ENCODE measurements at regions of chr12 and their contacts with region 1.

Region 1: DNA sequence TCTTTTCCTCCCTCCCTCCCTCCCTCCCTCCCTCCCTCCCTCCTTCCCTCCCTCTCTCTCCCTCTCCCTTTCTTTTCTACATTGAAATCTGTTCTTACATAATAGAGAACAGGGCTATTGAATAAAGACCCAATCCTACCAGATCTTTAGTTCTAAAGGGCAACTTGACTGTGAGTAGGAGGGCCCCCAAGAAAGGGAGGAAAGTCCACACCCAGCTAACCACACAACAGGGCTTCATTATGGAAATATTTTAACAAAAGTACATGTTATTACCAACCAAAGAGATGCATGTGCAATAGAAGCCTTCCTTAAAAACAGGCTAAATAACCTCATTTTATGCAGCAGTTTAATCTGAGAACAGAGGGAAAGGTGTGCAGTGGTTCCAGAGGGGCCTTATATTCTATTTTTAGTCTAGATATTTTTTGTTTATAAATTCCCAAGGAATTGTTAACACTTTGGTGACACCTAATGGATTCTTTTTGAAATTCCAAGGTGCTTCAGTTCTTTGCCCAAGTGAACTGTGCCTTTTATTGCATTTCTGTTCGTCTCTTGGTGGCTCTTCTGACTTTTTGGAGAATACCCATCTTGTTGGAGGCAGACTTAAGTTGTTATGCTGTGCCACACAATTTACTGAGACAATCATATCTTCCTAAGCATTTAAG is 63.0 kb downstream of the GNS start:
- DNase-seq: no peak
- ATAC-seq: 0 out of 2 replicates have a peak, but pooled peaks have one; percentile 31
- H3K4me3 ChIP-seq: no peak overlapping the region
- H3K27ac ChIP-seq: peak overlapping the region; percentile 46; the same call in 1 of the 2 replicates
- H3K4me1 ChIP-seq: peaks cover 32% of the 10 kb centered on the region
- H3K27me3 ChIP-seq: no peaks in the 10 kb centered on the region
- CTCF ChIP-seq: peak; percentile 47; the same call in 1 of the 2 replicates

Region 2: DNA sequence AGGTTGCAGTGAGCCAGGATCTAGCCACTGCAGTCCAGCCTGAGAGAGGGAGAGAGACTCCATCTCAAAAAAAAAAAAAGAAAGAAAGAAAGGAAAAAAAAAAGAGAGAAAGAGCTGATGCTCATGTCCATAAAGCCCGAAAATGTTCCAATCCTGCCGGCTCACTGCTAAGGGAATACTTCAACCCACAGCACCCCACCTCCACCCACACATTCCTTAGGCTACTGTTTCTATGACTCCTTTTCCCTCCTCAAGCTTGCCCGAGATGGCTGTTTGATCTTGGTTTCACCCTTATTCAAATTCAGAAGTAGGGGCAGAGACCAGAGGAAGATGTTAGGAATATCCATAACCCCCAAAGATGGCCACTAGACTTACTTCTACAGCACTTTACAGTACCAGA is 145.5 kb before region 1 on chr12:
- CTCF ChIA-PET with region 1: interaction called, 24 read pairs
- POLR2A ChIA-PET with region 1: no interaction called
- in situ Hi-C with region 1: no loop called
- intact Hi-C with region 1: loop called (anchors 1 kb)
- DNase-seq: no peak
- ATAC-seq: no peak
- H3K4me3 ChIP-seq: no peak overlapping the region
- H3K27ac ChIP-seq: no peak overlapping the region
- H3K4me1 ChIP-seq: no peaks in the 10 kb centered on the region
- H3K27me3 ChIP-seq: no peaks in the 10 kb centered on the region
- CTCF ChIP-seq: no peak

Region 3: DNA sequence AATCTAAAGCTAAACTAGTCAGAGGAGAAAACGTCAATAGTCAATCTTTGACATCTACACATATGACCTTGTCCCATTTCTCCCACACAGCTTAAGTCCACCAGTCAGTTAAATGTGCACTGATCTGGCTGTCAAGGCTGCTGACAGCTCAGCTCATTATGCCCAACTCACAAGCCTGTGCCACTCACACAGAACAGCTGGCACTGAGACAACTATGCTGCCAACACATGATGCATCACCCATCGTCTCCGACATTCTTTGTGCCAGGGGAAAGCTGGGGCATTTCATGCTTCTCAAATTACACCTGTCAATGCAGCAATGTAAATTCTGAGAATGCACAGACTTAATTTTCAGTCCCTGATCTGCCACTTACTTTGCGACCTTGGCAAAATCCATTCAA is 37.6 kb after region 1 on chr12:
- CTCF ChIA-PET with region 1: no interaction called
- POLR2A ChIA-PET with region 1: no interaction called
- in situ Hi-C with region 1: no loop called
- intact Hi-C with region 1: no loop called
- DNase-seq: peak; percentile 88
- ATAC-seq: peak; percentile 95
- H3K4me3 ChIP-seq: no peak overlapping the region
- H3K27ac ChIP-seq: no peak overlapping the region
- H3K4me1 ChIP-seq: no peaks in the 10 kb centered on the region
- H3K27me3 ChIP-seq: no peaks in the 10 kb centered on the region
- CTCF ChIP-seq: no peak

Measured in Panc1 (cell line).